ENCODE measurements at regions of chr15 and their contacts with region 1.

Region 1: GRCh38 chr15:63277038-63277892 is at the start of gene APH1B:
- DNase-seq: peak; percentile 91
- H3K4me3 ChIP-seq: peak within 1 kb of the TSS; percentile 81 to 97 (median 94)
- H3K27ac ChIP-seq: peak within 1 kb of the TSS; percentile 83 to 90 (median 90)
- H3K4me1 ChIP-seq: peaks cover 0 to 14% (median 6%) of the 10 kb centered on the region in 4 donors
- H3K27me3 ChIP-seq: no peaks in the 10 kb centered on the region
- CTCF ChIP-seq: no peak
- EP300 ChIP-seq: no peak
- POLR2A ChIP-seq: peak in 1 of 2 donors; percentile 19
- total RNA-seq, gene APH1B: 7.9 to 11.0 (median 9.9) TPM

Region 2: DNA sequence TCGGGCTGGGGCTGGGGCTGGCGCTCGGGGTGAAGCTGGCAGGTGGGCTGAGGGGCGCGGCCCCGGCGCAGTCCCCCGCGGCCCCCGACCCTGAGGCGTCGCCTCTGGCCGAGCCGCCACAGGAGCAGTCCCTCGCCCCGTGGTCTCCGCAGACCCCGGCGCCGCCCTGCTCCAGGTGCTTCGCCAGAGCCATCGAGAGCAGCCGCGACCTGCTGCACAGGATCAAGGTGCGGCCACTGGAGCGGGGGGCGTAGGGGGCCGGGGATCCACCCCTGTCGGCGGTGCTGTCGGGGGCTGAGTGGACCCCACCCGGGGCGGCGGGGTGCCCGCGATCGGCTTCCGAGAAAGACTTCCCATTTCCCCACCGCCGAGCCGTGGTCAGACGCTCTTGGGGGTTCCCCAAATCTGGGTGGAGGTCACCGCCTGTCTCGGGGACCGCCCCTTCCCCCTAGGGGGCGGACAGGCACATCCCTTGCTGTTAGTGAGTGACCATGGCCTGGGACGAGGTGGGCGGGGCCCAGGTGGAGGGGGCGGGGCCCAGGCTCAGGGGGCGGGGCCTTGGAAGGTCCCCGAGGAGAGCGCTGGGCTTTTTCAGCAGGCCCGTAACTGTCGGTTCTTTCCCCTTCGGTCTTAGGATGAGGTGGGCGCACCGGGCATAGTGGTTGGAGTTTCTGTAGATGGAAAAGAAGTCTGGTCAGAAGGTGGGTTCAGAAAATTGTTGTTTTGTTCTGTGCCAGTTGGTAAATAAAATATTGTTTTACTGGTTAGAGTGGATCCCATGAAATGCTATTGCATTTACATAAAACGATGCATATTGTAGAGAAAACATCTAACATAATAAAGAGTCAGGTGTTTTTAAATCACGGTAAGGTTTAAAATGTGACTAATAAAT is 155.0 kb before region 1 on chr15:
- intact Hi-C with region 1: loop called (anchors 10 kb)
- DNase-seq: peak; percentile 93
- H3K4me3 ChIP-seq: peak overlapping the region; percentile 66 to 99 (median 83)
- H3K27ac ChIP-seq: peak overlapping the region; percentile 89 to 94 (median 91)
- H3K4me1 ChIP-seq: peaks cover 0 to 13% (median 2%) of the 10 kb centered on the region in 4 donors
- H3K27me3 ChIP-seq: no peaks in the 10 kb centered on the region
- CTCF ChIP-seq: peak in 1 of 4 experiments; percentile 15
- EP300 ChIP-seq: no peak
- POLR2A ChIP-seq: no peak

Region 3: GRCh38 chr15:63188926-63189871 is 88.1 kb before region 1 on chr15 and contains the start of gene RAB8B:
- intact Hi-C with region 1: loop called (anchors 2 kb)
- DNase-seq: peak; percentile 100
- H3K4me3 ChIP-seq: peak within 1 kb of the TSS; percentile 81 to 95 (median 86)
- H3K27ac ChIP-seq: peak within 1 kb of the TSS; percentile 85 to 91 (median 88)
- H3K4me1 ChIP-seq: peaks cover 0 to 35% (median 18%) of the 10 kb centered on the region in 4 donors
- H3K27me3 ChIP-seq: no peaks in the 10 kb centered on the region
- CTCF ChIP-seq: no peak
- EP300 ChIP-seq: no peak
- POLR2A ChIP-seq: peak; percentile 43 to 62
- total RNA-seq, gene RAB8B: 21.7 to 30.4 (median 29.8) TPM

Measured in sigmoid colon (tissue), 7 donors.